CD4-positive, alpha-beta T cell (primary cell): ENCODE measurements at regions of chr20 and their contacts with region 1.

Region 1: DNA sequence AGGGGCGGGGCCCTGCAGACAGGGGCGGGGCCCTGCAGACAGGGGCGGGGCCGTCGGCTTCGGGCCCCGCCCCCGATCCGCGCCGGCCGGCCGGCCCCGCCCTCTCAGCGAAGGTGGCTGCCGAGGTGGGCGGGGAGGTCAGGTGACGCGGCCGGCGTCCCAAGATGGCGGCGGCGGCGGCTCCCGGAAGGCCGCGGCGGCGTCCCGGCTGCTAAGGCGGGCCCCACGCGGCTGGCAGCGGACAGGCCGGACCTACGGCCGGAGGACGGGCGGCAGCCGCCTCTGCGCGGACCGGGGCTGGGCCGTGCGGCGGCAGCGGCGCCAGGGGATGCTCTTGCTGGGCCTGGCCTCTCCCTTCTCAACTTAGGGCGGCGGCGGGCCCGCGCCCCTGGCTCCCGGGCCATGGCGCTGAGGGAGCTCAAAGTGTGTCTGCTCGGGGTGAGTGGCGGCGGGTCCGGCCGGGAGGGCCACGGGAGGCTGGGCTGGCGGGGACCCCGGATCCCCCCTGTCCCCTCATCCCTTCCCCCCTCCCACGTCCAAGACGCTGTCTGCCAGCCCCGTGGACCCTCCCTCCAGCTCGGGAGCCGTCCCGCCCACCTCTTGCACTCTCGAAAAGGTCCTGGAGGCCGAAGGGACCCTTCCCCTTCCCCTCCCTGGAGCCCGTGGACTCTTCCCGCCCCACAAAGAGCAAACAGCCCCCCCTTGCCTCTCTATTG is at the start of gene RAB22A:
- DNase-seq: peak; percentile 62 to 95 (median 80)
- ATAC-seq: peak; percentile 34
- H3K4me3 ChIP-seq: peak within 1 kb of the TSS; percentile 77
- H3K4me3 Mint-ChIP-seq: peak within 1 kb of the TSS; percentile 97
- H3K27ac ChIP-seq: peak within 1 kb of the TSS; percentile 88 to 89
- H3K27ac Mint-ChIP-seq: peak within 1 kb of the TSS; percentile 98
- H3K4me1 ChIP-seq: peaks cover 58% of the 10 kb centered on the region
- H3K4me1 Mint-ChIP-seq: peaks cover 64% of the 10 kb centered on the region
- H3K27me3 ChIP-seq: no peaks in the 10 kb centered on the region
- H3K27me3 Mint-ChIP-seq: no peaks in the 10 kb centered on the region
- CTCF ChIP-seq: no peak
- total RNA-seq, gene RAB22A: 16.5 to 17.2 TPM

Region 2: DNA sequence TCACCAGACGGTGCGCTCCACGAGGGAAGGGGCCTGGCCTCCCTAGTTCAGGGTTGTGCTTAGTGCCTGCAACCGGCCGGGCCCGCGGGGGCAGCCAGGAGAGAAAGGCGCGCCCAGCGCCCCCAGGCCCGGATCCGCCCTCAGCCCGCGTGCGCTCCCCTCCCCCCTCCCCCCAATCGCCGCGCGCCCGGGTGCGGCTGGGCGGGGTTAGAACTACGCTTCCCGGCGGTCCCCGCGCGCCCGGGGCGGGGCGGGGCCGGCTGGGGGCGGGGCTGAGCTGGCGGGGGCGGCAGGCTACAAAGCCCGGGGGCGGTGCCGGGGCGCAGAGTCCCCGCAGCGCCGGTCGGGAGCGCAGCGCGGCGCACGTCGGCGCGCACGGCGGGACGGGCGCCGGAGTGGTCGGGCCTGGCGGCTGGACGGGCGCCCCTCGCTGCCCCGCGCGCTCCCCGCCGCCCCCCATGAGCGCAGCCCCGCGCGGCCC is 918.6 kb before region 1 on chr20 and contains the start of gene RBM38:
- CTCF ChIA-PET with region 1: no interaction called
- POLR2A ChIA-PET with region 1: no interaction called
- intact Hi-C with region 1: loop called (anchors 5 kb)
- DNase-seq: peak; percentile 55 to 89 (median 72)
- ATAC-seq: peak; percentile 51
- H3K4me3 ChIP-seq: peak within 1 kb of the TSS; percentile 72
- H3K4me3 Mint-ChIP-seq: peak within 1 kb of the TSS; percentile 99
- H3K27ac ChIP-seq: peak within 1 kb of the TSS; percentile 83 to 88
- H3K27ac Mint-ChIP-seq: peak within 1 kb of the TSS; percentile 96
- H3K4me1 ChIP-seq: peaks cover 63% of the 10 kb centered on the region
- H3K4me1 Mint-ChIP-seq: peaks cover 53% of the 10 kb centered on the region
- H3K27me3 ChIP-seq: no peaks in the 10 kb centered on the region
- H3K27me3 Mint-ChIP-seq: peaks cover 6% of the 10 kb centered on the region
- CTCF ChIP-seq: no peak
- total RNA-seq, gene RBM38: 604 to 645 TPM

Region 3: DNA sequence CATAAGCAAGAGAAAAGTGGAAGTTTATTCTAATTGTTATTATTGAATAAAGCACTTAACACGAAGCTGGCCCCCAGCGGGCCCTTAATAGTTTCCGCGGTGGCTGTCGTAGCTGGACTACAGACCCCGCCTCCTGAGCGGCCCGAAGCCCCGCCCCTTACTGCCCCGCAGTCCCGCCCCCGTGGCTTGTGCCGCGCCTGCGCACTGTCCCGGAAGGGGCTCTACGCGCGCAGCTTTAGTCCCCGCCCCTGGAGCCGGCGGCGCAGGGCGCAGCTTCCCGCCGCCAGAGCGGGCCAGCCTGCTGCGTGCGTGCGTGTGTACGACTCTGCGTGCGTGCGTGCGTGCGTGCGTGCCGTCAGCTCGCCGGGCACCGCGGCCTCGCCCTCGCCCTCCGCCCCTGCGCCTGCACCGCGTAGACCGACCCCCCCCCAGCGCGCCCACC is 79.2 kb after region 1 on chr20 and contains the start of gene VAPB:
- CTCF ChIA-PET with region 1: interaction called, 3 read pairs
- POLR2A ChIA-PET with region 1: interaction called, 47 read pairs
- intact Hi-C with region 1: loop called (anchors 2 kb)
- DNase-seq: peak; percentile 93 to 99 (median 96)
- ATAC-seq: peak; percentile 95
- H3K4me3 ChIP-seq: peak within 1 kb of the TSS; percentile 81
- H3K4me3 Mint-ChIP-seq: peak within 1 kb of the TSS; percentile 96
- H3K27ac ChIP-seq: peak within 1 kb of the TSS; percentile 94 to 98
- H3K27ac Mint-ChIP-seq: peak within 1 kb of the TSS; percentile 92
- H3K4me1 ChIP-seq: peaks cover 31% of the 10 kb centered on the region
- H3K4me1 Mint-ChIP-seq: peaks cover 43% of the 10 kb centered on the region
- H3K27me3 ChIP-seq: peaks cover 0 to 4% of the 10 kb centered on the region in 2 experiments
- H3K27me3 Mint-ChIP-seq: no peaks in the 10 kb centered on the region
- CTCF ChIP-seq: no peak
- total RNA-seq, gene VAPB: 25.2 to 29.4 TPM

Region 4: GRCh38 chr20:58692594-58693226 is 383.0 kb after region 1 on chr20 and contains the start of gene NPEPL1:
- CTCF ChIA-PET with region 1: no interaction called
- POLR2A ChIA-PET with region 1: interaction called, 3 read pairs
- intact Hi-C with region 1: loop called in 1 of 2 experiments (anchors 5 kb)
- DNase-seq: peak in 12 of 14 experiments; percentile 22 to 87 (median 64)
- ATAC-seq: peak; percentile 95
- H3K4me3 ChIP-seq: peak within 1 kb of the TSS; percentile 50
- H3K4me3 Mint-ChIP-seq: peak within 1 kb of the TSS; percentile 83
- H3K27ac ChIP-seq: peak within 1 kb of the TSS; percentile 10 to 65
- H3K27ac Mint-ChIP-seq: peak within 1 kb of the TSS; percentile 81
- H3K4me1 ChIP-seq: peaks cover 23% of the 10 kb centered on the region
- H3K4me1 Mint-ChIP-seq: peaks cover 11% of the 10 kb centered on the region
- H3K27me3 ChIP-seq: no peaks in the 10 kb centered on the region
- H3K27me3 Mint-ChIP-seq: no peaks in the 10 kb centered on the region
- CTCF ChIP-seq: no peak
- total RNA-seq, gene NPEPL1: 58.3 to 61.1 TPM

Region 5: DNA sequence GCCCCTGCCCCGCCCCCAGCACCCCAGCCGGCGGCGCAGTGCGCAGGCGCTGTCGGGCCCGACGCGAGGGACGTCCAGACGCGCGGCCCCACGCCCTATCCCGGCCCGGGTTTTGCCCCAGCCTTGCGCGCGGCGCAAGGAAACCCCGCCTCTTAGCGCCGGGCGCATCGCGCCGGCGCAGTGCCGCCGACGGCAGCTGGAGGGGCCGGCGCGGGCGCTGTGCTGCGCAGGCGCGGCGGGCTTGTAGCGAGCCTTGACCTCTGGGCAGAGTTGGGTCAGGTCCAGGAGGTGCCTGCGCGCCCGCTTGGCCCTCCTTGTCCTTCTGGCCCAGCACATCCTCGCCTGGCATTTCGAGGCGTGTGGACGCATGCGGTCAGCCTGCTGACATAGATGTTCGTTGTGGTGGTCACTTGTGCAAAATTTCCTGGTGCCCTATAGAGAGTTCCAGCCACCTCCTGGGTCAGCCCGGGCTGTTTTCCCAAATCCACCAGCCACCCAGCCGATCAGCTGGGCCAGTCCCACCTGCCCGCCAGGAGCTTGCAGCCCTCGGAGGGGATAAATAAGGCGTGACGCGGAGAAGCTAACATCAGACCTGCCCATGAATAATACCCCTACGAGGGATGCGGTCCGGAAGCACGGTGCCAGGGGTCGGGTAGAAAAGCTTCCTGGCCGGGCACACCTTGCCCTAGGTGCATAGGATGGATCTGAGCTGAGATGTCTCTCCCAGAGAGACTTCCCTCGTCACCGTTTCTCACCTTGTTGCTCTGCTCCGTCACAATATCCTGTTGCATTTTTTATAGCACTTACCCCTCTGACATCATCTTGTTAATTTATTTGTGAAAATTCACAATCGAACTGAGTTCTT is 733.3 kb after region 1 on chr20:
- CTCF ChIA-PET with region 1: no interaction called
- POLR2A ChIA-PET with region 1: no interaction called
- intact Hi-C with region 1: loop called in 1 of 2 experiments (anchors 10 kb)
- DNase-seq: peak; percentile 87 to 97 (median 94)
- ATAC-seq: peak; percentile 94
- H3K4me3 ChIP-seq: peak overlapping the region; percentile 85
- H3K4me3 Mint-ChIP-seq: peak overlapping the region; percentile 92
- H3K27ac ChIP-seq: peak overlapping the region; percentile 67 to 77
- H3K27ac Mint-ChIP-seq: peak overlapping the region; percentile 91
- H3K4me1 ChIP-seq: peaks cover 41% of the 10 kb centered on the region
- H3K4me1 Mint-ChIP-seq: peaks cover 48% of the 10 kb centered on the region
- H3K27me3 ChIP-seq: no peaks in the 10 kb centered on the region
- H3K27me3 Mint-ChIP-seq: no peaks in the 10 kb centered on the region
- CTCF ChIP-seq: no peak